ENCODE measurements at regions of chrX and their contacts with region 1.

Region 1: GRCh38 chrX:15686818-15687685 is 22.4 kb upstream of the CLTRN start:
- DNase-seq: peak in 1 of 2 donors; percentile 37
- H3K4me3 ChIP-seq: no peak overlapping the region
- CTCF ChIP-seq: no peak
- POLR2A ChIP-seq: no peak

Region 2: GRCh38 chrX:15416133-15416993 is 270.7 kb before region 1 on chrX:
- intact Hi-C with region 1: no loop called
- DNase-seq: no peak
- H3K4me3 ChIP-seq: no peak overlapping the region
- CTCF ChIP-seq: no peak
- POLR2A ChIP-seq: no peak

Region 3: GRCh38 chrX:15789979-15790768 is 103.1 kb after region 1 on chrX and contains the start of gene ZRSR2:
- intact Hi-C with region 1: loop called (anchors 10 kb)
- DNase-seq: peak; percentile 64 to 97
- H3K4me3 ChIP-seq: peak within 1 kb of the TSS; percentile 50
- CTCF ChIP-seq: no peak
- POLR2A ChIP-seq: no peak
- total RNA-seq, gene ZRSR2: 1.9 to 11.2 (median 4.6) TPM